Activated CD8-positive, alpha-beta T cell treated with anti-CD3 and anti-CD28 coated beads for 36 hours (primary cell): ENCODE measurements at regions of chr6 and their contacts with region 1.

Region 1: GRCh38 chr6:3929281-3929798 is 80.2 kb downstream of the FAM50B start:
- DNase-seq: no peak
- ATAC-seq: no peak
- H3K4me3 Mint-ChIP-seq: no peak overlapping the region
- H3K27ac Mint-ChIP-seq: no peak overlapping the region
- H3K4me1 Mint-ChIP-seq: no peaks in the 10 kb centered on the region
- H3K27me3 Mint-ChIP-seq: peaks cover 4% of the 10 kb centered on the region
- CTCF ChIP-seq: no peak

Region 2: GRCh38 chr6:3990692-3991501 is 61.6 kb after region 1 on chr6:
- CTCF ChIA-PET with region 1: interaction called, 13 read pairs
- POLR2A ChIA-PET with region 1: no interaction called
- intact Hi-C with region 1: no loop called
- DNase-seq: peak; percentile 86
- ATAC-seq: peak; percentile 98
- H3K4me3 Mint-ChIP-seq: no peak overlapping the region
- H3K27ac Mint-ChIP-seq: no peak overlapping the region
- H3K4me1 Mint-ChIP-seq: peaks cover 8% of the 10 kb centered on the region
- H3K27me3 Mint-ChIP-seq: no peaks in the 10 kb centered on the region
- CTCF ChIP-seq: peak; percentile 75